HepG2 (cell line): ENCODE measurements at regions of chr22 and their contacts with region 1.

Region 1: GRCh38 chr22:41468381-41469217 is at the starts of genes ACO2 and PHF5A:
- DNase-seq: peak; percentile 96
- ATAC-seq: peak; percentile 93
- H3K4me3 ChIP-seq: peak within 1 kb of the TSS; percentile 92 to 95 (median 92)
- H3K27ac ChIP-seq: peak within 1 kb of the TSS; percentile 98
- H3K4me1 ChIP-seq: peaks cover 66% of the 10 kb centered on the region
- H3K27me3 ChIP-seq: no peaks in the 10 kb centered on the region; a peak in 1 of 5 replicates
- CTCF ChIP-seq: no peak; the same call in 1 of the 2 replicates
- EP300 ChIP-seq: peak in 1 of 2 experiments; percentile 100; a peak in 2 of 4 replicates
- POLR2A ChIP-seq: peak; percentile 75 to 82
- RAD21 ChIP-seq: no peak
- total RNA-seq, gene ACO2: 39.3 and 45.6 TPM in 2 replicates
- total RNA-seq, gene PHF5A: 105 and 154 TPM in 2 replicates

Region 2: GRCh38 chr22:41458161-41458728 is 10.4 kb before region 1 on chr22:
- CTCF ChIA-PET with region 1: no interaction called
- POLR2A ChIA-PET with region 1: interaction called, 21 read pairs
- in situ Hi-C with region 1: no loop called
- intact Hi-C with region 1: no loop called
- DNase-seq: no peak
- ATAC-seq: no peak
- H3K4me3 ChIP-seq: no peak overlapping the region
- H3K27ac ChIP-seq: no peak overlapping the region
- H3K4me1 ChIP-seq: peaks cover 25% of the 10 kb centered on the region
- H3K27me3 ChIP-seq: no peaks in the 10 kb centered on the region
- CTCF ChIP-seq: no peak
- EP300 ChIP-seq: no peak
- POLR2A ChIP-seq: no peak
- RAD21 ChIP-seq: no peak